Thyroid gland (tissue), 4 donors: ENCODE measurements at regions of chr22 and their contacts with region 1.

Region 1: DNA sequence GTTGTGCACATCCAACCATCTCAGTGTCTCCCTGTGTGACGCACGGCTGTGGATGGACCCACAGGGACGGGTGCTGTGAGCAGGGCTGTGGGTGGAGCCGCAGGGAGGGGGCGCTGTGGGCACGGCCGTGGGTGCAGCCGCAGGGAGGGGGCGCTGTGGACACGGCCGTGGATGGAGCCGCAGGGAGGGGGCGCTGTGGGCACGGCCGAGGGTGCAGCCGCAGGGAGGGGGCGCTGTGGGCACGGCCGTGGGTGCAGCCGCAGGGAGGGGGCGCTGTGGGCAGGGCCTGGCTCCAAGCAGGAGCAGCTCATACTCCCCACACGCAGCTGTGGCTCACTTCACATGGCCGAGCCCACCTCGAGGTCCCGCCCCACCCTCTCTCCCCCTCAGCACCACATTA is 6.0 kb upstream of the MAPK11 start:
- DNase-seq: peak; percentile 48 to 49
- H3K4me3 ChIP-seq: no peak overlapping the region
- H3K27ac ChIP-seq: no peak overlapping the region
- H3K4me1 ChIP-seq: peaks cover 10 to 12% of the 10 kb centered on the region in 2 donors
- H3K27me3 ChIP-seq: no peaks in the 10 kb centered on the region
- CTCF ChIP-seq: peak in 2 of 6 experiments; percentile 27 to 50
- POLR2A ChIP-seq: no peak

Region 2: GRCh38 chr22:49992921-49993648 is 283.1 kb before region 1 on chr22:
- intact Hi-C with region 1: no loop called
- DNase-seq: peak; percentile 66 to 67
- H3K4me3 ChIP-seq: no peak overlapping the region
- H3K27ac ChIP-seq: no peak overlapping the region
- H3K4me1 ChIP-seq: peaks cover 0 to 8% of the 10 kb centered on the region in 2 donors
- H3K27me3 ChIP-seq: no peaks in the 10 kb centered on the region
- CTCF ChIP-seq: peak; percentile 43 to 74 (median 66)
- POLR2A ChIP-seq: no peak

Region 3: DNA sequence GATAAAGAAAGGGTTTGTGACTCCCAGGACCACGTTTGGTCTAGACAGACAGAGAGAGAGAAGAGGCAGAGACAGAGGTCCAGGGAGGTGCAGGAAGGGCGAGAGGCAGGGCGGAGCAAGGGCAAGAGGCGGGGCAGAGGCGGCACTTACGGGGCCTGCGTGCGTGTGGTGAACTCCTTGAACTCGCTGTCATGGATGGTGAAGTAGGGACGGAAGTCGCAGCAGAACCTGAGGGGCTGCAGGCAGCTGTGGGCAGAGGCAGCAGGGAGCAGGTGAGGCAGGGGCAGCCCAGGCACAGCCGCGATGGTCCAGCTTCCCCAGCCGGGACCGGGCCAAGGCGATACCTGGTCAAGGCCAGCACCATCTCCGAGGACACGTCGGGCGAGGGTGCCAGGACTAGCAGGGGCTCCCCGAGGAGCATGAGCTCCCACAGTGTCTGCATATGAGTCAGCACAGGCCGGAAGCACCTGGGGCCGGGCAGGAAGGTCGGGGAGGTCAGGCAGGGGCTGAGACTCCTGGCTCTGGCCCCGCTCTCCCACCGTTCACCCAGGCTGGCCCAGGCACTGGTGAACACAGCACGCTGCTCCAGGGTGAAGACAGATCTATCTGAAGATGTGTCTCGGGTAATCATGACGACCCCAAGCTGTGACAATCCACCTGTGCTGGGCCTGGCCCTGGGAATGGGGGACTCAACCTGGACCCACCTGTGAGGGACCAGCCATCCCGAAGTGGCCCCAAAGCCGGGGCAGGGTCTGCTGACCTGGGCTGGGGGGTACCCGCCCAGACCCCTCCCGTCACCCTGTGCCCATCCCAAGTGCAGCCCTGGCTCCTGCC is 38.5 kb after region 1 on chr22:
- intact Hi-C with region 1: loop called (anchors 5 kb)
- DNase-seq: peak; percentile 84 to 85
- H3K4me3 ChIP-seq: no peak overlapping the region
- H3K27ac ChIP-seq: peak overlapping the region in 1 of 3 donors; percentile 33
- H3K4me1 ChIP-seq: peaks cover 15 to 26% of the 10 kb centered on the region in 2 donors
- H3K27me3 ChIP-seq: no peaks in the 10 kb centered on the region
- CTCF ChIP-seq: no peak
- POLR2A ChIP-seq: peak in 1 of 2 donors; percentile 7

Region 4: GRCh38 chr22:50326959-50327710 is 51.0 kb after region 1 on chr22 and contains the start of gene DENND6B:
- intact Hi-C with region 1: loop called (anchors 5 kb)
- DNase-seq: peak; percentile 79 to 81
- H3K4me3 ChIP-seq: peak within 1 kb of the TSS; percentile 52 to 76 (median 56)
- H3K27ac ChIP-seq: peak within 1 kb of the TSS; percentile 86 to 90 (median 88)
- H3K4me1 ChIP-seq: peaks cover 10 to 13% of the 10 kb centered on the region in 2 donors
- H3K27me3 ChIP-seq: no peaks in the 10 kb centered on the region
- CTCF ChIP-seq: peak in 4 of 6 experiments; percentile 18 to 97 (median 94)
- POLR2A ChIP-seq: peak in 1 of 2 donors; percentile 56
- total RNA-seq, gene DENND6B: 4.3 to 14.3 (median 9.3) TPM